Activated CD4-positive, alpha-beta T cell treated with anti-CD3 and anti-CD28 coated beads for 36 hours (primary cell): ENCODE measurements at regions of chr18 and their contacts with region 1.

Region 1: GRCh38 chr18:67217551-67218166 is 298.9 kb downstream of the DSEL start:
- DNase-seq: peak; percentile 67
- ATAC-seq: peak; percentile 83
- H3K4me3 Mint-ChIP-seq: no peak overlapping the region
- H3K27ac Mint-ChIP-seq: no peak overlapping the region
- H3K4me1 Mint-ChIP-seq: no peaks in the 10 kb centered on the region
- H3K27me3 Mint-ChIP-seq: peaks cover 2% of the 10 kb centered on the region

Region 2: DNA sequence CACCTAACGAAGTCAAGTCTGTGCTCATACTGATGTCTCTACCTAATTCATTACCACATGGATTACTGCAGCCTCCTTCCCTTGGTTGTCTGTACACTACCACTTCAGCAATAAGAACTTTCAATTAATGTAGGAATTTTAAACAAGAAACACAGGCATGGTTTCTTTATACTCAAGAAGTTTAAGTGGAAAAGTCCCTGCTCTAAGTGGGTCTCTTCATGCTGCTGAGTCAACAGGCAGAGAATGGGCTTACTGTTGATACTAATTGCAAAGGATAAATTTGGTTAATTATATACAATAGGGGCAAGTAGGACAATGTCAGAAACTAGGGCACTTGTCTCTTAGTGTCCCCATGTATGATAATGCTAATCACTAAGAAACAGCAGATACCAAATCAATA is 93.8 kb before region 1 on chr18:
- CTCF ChIA-PET with region 1: no interaction called
- POLR2A ChIA-PET with region 1: no interaction called
- intact Hi-C with region 1: no loop called
- DNase-seq: no peak
- ATAC-seq: no peak
- H3K4me3 Mint-ChIP-seq: no peak overlapping the region
- H3K27ac Mint-ChIP-seq: no peak overlapping the region
- H3K4me1 Mint-ChIP-seq: no peaks in the 10 kb centered on the region
- H3K27me3 Mint-ChIP-seq: peaks cover 3% of the 10 kb centered on the region

Region 3: DNA sequence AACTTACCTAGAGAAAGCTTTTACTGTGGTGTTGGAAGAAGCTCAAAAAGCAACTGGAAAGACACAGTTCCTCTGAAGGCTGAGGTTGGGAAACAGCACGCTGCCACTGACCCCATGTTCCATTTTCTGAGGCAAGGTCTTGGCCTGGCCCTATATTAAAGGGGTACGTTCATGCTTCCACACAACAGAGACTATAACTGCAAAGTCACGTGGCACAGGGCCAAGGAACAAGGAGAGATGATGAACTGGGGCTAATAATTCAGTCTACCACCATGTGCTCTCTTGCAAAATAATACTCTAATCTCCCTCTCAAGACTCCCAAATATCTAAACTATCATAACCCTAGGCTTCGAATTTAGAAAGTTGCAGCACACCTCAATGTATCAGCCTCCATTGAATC is 82.7 kb before region 1 on chr18:
- CTCF ChIA-PET with region 1: no interaction called
- POLR2A ChIA-PET with region 1: no interaction called
- intact Hi-C with region 1: no loop called
- DNase-seq: no peak
- ATAC-seq: no peak
- H3K4me3 Mint-ChIP-seq: no peak overlapping the region
- H3K27ac Mint-ChIP-seq: no peak overlapping the region
- H3K4me1 Mint-ChIP-seq: no peaks in the 10 kb centered on the region
- H3K27me3 Mint-ChIP-seq: no peaks in the 10 kb centered on the region

Region 4: GRCh38 chr18:67199993-67200617 is 17.6 kb before region 1 on chr18:
- CTCF ChIA-PET with region 1: no interaction called
- POLR2A ChIA-PET with region 1: no interaction called
- intact Hi-C with region 1: no loop called
- DNase-seq: no peak
- ATAC-seq: peak; percentile 60
- H3K4me3 Mint-ChIP-seq: no peak overlapping the region
- H3K27ac Mint-ChIP-seq: no peak overlapping the region
- H3K4me1 Mint-ChIP-seq: no peaks in the 10 kb centered on the region
- H3K27me3 Mint-ChIP-seq: peaks cover 7% of the 10 kb centered on the region

Region 5: DNA sequence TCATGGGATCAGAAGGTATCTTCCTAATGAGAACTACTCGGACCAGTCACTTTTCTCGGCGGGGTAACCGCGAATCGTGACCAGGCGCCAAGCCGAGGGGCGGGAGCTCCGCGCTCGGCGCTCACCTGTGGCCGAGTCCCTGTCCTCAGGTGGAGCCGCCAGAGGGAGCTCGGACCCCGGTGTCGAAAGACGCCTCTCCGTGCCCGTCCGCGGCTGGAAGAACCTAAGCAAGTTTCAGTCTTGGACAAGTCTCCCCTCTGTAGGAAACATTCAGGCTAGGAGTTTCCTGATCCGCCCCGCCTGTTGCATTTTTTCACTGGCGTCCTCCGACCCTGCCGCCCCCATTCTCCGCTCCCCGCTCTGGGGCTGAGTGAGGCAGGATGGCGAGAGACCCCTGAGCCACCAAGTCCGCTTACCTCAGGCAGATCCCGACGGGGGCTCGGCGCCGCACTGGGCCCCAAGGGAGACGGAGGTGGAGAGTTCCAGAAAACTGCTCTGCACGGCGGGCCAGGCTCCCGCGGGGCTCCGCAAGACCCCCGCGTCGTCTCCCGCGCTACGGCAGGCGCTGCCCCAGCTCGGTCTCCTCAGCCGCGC is 298.4 kb after region 1 on chr18:
- CTCF ChIA-PET with region 1: no interaction called
- POLR2A ChIA-PET with region 1: no interaction called
- intact Hi-C with region 1: loop called in 1 of 2 experiments (anchors 2 kb)
- DNase-seq: peak; percentile 78
- ATAC-seq: peak; percentile 10
- H3K4me3 Mint-ChIP-seq: peak overlapping the region; percentile 90
- H3K27ac Mint-ChIP-seq: peak overlapping the region; percentile 37
- H3K4me1 Mint-ChIP-seq: peaks cover 16% of the 10 kb centered on the region
- H3K27me3 Mint-ChIP-seq: peaks cover 15% of the 10 kb centered on the region

Region 6: DNA sequence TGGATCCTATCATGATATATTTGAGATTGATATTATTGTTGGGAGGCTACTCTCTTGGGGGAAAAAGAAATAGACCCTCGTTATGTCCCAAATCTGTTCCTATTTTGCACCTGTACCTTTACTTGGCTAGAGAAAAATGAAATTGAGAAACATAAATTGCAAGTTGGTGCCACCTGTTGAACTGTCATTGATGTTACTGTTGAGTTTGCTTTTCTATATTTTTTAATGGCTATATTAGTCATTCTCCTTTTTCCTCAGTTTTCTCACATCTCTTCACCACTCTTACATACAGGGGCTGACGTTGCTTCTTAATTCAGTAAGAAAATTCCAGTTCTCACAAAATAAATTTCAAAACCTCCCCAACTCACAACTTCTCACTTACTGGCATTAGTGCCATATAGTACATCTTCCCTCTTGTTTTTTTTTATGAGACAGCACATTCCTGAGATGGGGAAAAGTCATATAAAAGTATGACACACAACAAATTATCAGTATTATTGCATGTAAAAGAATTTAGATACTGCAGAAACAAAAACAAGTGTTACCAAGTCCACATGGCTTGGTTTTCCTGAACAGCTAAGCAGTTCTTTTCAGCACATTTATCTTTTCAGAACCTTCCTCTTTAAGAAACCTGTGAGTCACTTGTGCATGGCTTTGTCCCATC is 647.1 kb after region 1 on chr18:
- CTCF ChIA-PET with region 1: no interaction called
- POLR2A ChIA-PET with region 1: no interaction called
- intact Hi-C with region 1: loop called in 1 of 2 experiments (anchors 10 kb)
- DNase-seq: no peak
- ATAC-seq: no peak
- H3K4me3 Mint-ChIP-seq: no peak overlapping the region
- H3K27ac Mint-ChIP-seq: no peak overlapping the region
- H3K4me1 Mint-ChIP-seq: no peaks in the 10 kb centered on the region
- H3K27me3 Mint-ChIP-seq: no peaks in the 10 kb centered on the region

Region 7: DNA sequence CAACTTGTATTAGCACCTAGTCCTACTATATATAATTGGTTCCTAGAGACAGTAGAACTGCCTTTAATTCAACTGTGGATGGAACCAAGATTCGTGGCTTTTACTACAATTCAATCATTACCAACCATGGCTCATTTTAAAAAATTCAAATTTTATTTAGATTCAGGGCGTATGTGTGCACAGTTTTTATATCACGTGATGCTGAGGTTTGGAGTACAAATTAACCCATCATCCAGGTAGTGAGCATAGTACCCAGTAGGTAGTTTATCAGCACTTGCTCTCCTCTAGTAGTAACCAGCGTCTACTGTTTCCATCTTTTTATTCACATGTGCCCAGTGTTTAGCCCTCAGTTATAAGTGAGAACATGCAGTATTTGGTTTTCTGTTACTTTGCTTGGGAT is 666.8 kb after region 1 on chr18:
- CTCF ChIA-PET with region 1: no interaction called
- POLR2A ChIA-PET with region 1: no interaction called
- intact Hi-C with region 1: no loop called
- DNase-seq: no peak
- ATAC-seq: no peak
- H3K4me3 Mint-ChIP-seq: no peak overlapping the region
- H3K27ac Mint-ChIP-seq: no peak overlapping the region
- H3K4me1 Mint-ChIP-seq: no peaks in the 10 kb centered on the region
- H3K27me3 Mint-ChIP-seq: no peaks in the 10 kb centered on the region

Region 8: GRCh38 chr18:68623342-68623741 is 1405.7 kb after region 1 on chr18:
- CTCF ChIA-PET with region 1: no interaction called
- POLR2A ChIA-PET with region 1: no interaction called
- intact Hi-C with region 1: loop called in 1 of 2 experiments (anchors 2 kb)
- DNase-seq: peak; percentile 48
- ATAC-seq: no peak
- H3K4me3 Mint-ChIP-seq: no peak overlapping the region
- H3K27ac Mint-ChIP-seq: no peak overlapping the region
- H3K4me1 Mint-ChIP-seq: no peaks in the 10 kb centered on the region
- H3K27me3 Mint-ChIP-seq: peaks cover 4% of the 10 kb centered on the region

Region 9: GRCh38 chr18:68660354-68661183 is 1442.9 kb after region 1 on chr18:
- CTCF ChIA-PET with region 1: interaction called, 6 read pairs
- POLR2A ChIA-PET with region 1: no interaction called
- intact Hi-C with region 1: loop called (anchors 1 kb)
- DNase-seq: no peak
- ATAC-seq: no peak
- H3K4me3 Mint-ChIP-seq: no peak overlapping the region
- H3K27ac Mint-ChIP-seq: no peak overlapping the region
- H3K4me1 Mint-ChIP-seq: no peaks in the 10 kb centered on the region
- H3K27me3 Mint-ChIP-seq: no peaks in the 10 kb centered on the region

Region 10: DNA sequence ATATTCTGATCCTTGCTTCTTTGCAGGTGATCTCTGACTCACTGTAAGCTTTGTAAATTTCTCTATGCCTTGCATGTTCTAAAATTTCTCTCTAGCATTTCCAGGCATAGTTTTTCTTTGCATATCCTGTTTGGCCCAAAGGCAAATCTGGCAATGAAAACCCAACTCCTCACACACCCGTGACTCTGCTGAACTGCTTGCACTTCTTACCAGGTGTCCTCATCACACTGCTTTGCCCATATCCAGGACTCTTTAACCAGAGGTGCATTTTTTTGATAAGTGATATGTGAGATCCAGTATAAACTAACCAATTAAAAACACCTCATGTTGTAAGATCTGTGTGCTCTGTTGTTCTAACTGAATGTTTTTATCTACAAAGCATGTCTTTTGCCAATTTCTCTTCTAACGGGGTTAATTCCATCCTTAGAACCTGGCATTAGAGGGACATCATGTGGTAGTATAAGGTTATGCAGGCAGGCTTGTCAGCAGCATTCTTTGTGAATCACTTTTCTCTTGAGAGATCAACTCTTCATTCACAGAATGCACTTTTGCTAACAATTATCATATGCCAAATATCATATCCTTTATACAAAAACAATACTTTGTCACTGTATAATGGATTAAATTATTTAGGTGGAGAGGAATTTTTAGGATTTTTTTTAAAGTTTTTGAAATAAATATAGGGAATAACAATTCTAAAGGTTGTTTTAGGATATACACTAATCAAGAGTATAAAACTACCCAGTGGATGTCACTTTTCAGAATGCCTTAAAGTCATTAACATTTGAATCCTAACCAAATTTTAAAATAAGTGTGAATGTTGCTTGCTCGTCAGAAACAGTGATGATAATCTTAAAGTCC is 1518.1 kb after region 1 on chr18:
- CTCF ChIA-PET with region 1: no interaction called
- POLR2A ChIA-PET with region 1: no interaction called
- intact Hi-C with region 1: loop called in 1 of 2 experiments (anchors 1 kb)
- DNase-seq: peak; percentile 24
- ATAC-seq: peak; percentile 77
- H3K4me3 Mint-ChIP-seq: no peak overlapping the region
- H3K27ac Mint-ChIP-seq: no peak overlapping the region
- H3K4me1 Mint-ChIP-seq: no peaks in the 10 kb centered on the region
- H3K27me3 Mint-ChIP-seq: no peaks in the 10 kb centered on the region